Cardiac septum (tissue), 1 donor: ENCODE measurements at regions of chr1 and their contacts with region 1.

Region 1: GRCh38 chr1:23577056-23578004 is 18.0 kb upstream of the ID3 start:
- DNase-seq: no peak

Region 2: GRCh38 chr1:23484253-23485001 is 92.9 kb before region 1 on chr1:
- intact Hi-C with region 1: no loop called
- DNase-seq: peak; percentile 95

Region 3: GRCh38 chr1:23554481-23555269 is 22.7 kb before region 1 on chr1:
- intact Hi-C with region 1: loop called (anchors 1 kb)
- DNase-seq: peak; percentile 96

Region 4: DNA sequence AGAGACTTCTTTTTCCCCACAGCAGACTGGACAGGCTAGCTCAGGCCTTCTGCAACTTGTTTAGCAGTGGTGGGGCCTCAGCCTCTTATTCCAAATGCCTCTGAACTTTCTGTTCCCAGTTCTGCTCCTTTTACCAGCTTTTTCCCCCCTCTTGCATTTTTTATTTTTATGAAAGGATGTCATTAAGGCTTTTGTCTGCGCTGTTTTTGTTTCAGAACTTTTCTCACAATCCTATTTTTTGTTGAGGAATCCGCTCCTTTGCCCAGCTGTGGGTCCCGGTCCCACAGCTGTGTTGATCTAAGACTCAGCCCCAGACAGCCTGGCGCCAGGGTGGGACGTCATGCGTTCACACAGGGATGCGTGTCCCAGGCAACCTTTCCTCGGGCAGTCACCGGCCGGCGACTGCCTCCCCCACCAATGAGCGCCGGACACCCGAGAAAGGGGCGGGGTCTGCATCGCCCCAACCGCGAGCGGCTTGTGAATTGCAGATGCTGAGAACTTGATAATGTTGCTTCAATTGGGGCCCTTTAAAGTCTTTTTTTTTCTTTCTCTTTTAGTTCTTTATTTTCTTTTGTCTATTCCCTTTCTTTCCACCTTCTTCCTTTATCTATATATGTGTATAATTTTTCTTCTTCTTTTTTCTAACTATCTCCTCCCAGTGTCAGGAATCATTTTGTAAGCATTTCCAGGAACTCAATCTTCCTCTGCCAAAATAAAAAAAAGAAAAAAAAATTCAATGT is 15.0 kb before region 1 on chr1:
- intact Hi-C with region 1: loop called (anchors 2 kb)
- DNase-seq: peak; percentile 97